GM12878 (cell line): ENCODE measurements at regions of chr1 and their contacts with region 1.

Region 1: GRCh38 chr1:160607011-160607671 is 27.8 kb upstream of the CD84 start:
- DNase-seq: peak; percentile 90
- ATAC-seq: peak; percentile 83
- H3K4me3 ChIP-seq: no peak overlapping the region
- H3K27ac ChIP-seq: peak overlapping the region; percentile 89
- H3K4me1 ChIP-seq: peaks cover 30% of the 10 kb centered on the region
- H3K27me3 ChIP-seq: no peaks in the 10 kb centered on the region
- CTCF ChIP-seq: peak; percentile 68 to 85 (median 84)
- EP300 ChIP-seq: no peak
- POLR2A ChIP-seq: no peak
- RAD21 ChIP-seq: peak; percentile 99

Region 2: GRCh38 chr1:160354388-160354985 is 252.7 kb before region 1 on chr1:
- CTCF ChIA-PET with region 1: interaction called, 8 read pairs
- POLR2A ChIA-PET with region 1: no interaction called
- RAD21 ChIA-PET with region 1: no interaction called
- SMC1A ChIA-PET with region 1: interaction called, 10 read pairs
- in situ Hi-C with region 1: no loop called
- intact Hi-C with region 1: no loop called
- DNase-seq: no peak
- ATAC-seq: peak; percentile 82
- H3K4me3 ChIP-seq: no peak overlapping the region
- H3K27ac ChIP-seq: no peak overlapping the region
- H3K4me1 ChIP-seq: no peaks in the 10 kb centered on the region
- H3K27me3 ChIP-seq: no peaks in the 10 kb centered on the region
- CTCF ChIP-seq: peak; percentile 29 to 55 (median 55)
- EP300 ChIP-seq: no peak
- POLR2A ChIP-seq: no peak
- RAD21 ChIP-seq: peak; percentile 38; the same call in 1 of the 2 replicates

Region 3: DNA sequence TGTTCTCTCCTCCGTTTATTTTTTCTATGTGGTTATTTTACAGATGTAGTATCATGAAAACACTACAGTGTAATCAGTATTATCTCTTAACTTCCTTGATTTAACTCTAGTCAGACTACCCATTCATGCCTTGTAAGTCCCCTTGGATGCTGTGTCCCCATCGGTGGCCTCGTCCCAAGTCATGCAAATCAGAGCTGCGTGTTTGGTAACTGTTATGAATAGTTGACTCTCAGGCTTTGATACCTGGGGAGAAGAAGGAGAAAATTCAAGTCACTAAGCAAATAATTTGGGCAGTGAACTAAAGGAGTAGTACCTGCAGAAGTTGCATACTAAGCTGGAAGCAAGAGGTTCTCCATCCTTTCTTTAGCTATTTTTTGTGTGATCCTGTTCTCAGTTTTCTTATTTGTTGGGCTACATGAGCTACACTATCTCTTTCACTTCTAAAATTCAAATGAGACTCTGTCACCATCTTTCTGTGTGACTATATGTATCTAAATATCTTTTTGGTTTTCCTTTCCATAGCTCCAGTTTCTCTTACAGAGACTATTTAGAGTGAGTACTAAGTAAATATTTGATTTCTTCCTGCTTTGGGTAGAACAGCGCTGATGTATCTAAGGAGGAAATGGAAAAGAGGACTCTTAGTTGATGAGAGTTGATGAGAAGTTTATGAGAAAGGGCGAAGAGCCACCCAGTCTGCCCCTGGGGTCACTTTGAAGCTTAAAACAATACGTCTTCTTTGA is 155.9 kb before region 1 on chr1:
- CTCF ChIA-PET with region 1: interaction called, 7 read pairs
- POLR2A ChIA-PET with region 1: no interaction called
- RAD21 ChIA-PET with region 1: interaction called, 14 read pairs
- SMC1A ChIA-PET with region 1: interaction called, 9 read pairs
- in situ Hi-C with region 1: no loop called
- intact Hi-C with region 1: no loop called
- DNase-seq: peak; percentile 44
- ATAC-seq: peak; percentile 43
- H3K4me3 ChIP-seq: 0 out of 2 replicates have a peak overlapping the region, but pooled peaks have one; percentile 2
- H3K27ac ChIP-seq: peak overlapping the region; percentile 82
- H3K4me1 ChIP-seq: peaks cover 47% of the 10 kb centered on the region
- H3K27me3 ChIP-seq: no peaks in the 10 kb centered on the region
- CTCF ChIP-seq: no peak
- EP300 ChIP-seq: no peak
- POLR2A ChIP-seq: no peak
- RAD21 ChIP-seq: no peak

Region 4: DNA sequence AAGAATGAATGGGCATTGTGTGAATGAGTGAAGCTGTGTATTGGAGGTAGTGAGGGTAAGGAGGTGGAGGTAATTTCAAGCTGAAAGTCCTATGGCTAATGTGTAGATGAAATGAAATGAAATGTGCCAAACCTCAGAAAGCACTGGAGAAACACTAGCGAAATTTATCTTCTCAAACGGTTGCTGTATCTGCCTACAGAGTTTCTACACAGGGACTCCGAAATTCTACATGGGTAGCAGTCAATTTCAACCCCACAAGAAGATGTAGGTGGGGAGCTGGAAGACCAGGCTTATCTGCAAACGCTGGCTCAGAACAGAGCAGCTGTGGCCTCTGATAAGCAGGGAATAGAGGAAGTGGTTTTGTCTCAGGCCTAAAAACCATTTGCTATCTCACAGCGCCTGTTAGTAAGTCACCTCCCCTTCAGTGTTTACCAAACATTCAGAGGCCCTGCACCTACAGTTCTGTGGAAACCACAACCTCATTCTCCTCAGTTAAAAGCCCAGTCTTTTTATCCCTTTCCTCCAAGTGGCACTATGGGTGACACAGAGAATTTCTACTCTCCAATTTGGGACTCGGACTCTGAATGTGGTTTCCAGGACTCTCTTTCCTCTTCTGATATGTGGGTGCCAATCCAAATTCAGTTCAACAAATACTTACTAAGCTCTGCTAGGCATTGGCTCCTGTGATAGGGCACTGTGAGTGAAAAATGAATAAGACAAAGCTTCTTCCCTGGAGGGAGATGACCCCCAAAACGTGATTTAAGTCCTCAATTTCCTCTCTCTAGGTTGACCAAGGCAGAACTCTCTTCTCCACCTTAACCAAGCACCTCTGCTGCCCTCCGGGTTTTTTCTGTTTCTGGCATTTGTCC is 66.9 kb before region 1 on chr1:
- CTCF ChIA-PET with region 1: interaction called, 355 read pairs
- POLR2A ChIA-PET with region 1: interaction called, 12 read pairs
- RAD21 ChIA-PET with region 1: interaction called, 257 read pairs
- SMC1A ChIA-PET with region 1: interaction called, 395 read pairs
- in situ Hi-C with region 1: loop called (anchors 5 kb)
- intact Hi-C with region 1: no loop called
- DNase-seq: peak; percentile 95
- ATAC-seq: peak; percentile 95
- H3K4me3 ChIP-seq: peak overlapping the region; percentile 38; the same call in 1 of the 2 replicates
- H3K27ac ChIP-seq: peak overlapping the region; percentile 92
- H3K4me1 ChIP-seq: peaks cover 23% of the 10 kb centered on the region
- H3K27me3 ChIP-seq: no peaks in the 10 kb centered on the region
- CTCF ChIP-seq: no peak
- EP300 ChIP-seq: peak; percentile 53 to 73; a peak in 3 of 4 replicates
- POLR2A ChIP-seq: peak; percentile 66
- RAD21 ChIP-seq: 0 out of 2 replicates have a peak, but pooled peaks have one; percentile 11

Region 5: GRCh38 chr1:160567858-160568682 is 39.1 kb before region 1 on chr1:
- CTCF ChIA-PET with region 1: interaction called, 6 read pairs
- POLR2A ChIA-PET with region 1: interaction called, 45 read pairs
- RAD21 ChIA-PET with region 1: interaction called, 123 read pairs
- SMC1A ChIA-PET with region 1: interaction called, 117 read pairs
- in situ Hi-C with region 1: no loop called
- intact Hi-C with region 1: no loop called
- DNase-seq: no peak
- ATAC-seq: peak; percentile 86
- H3K4me3 ChIP-seq: peak overlapping the region; percentile 28; the same call in 1 of the 2 replicates
- H3K27ac ChIP-seq: peak overlapping the region; percentile 68
- H3K4me1 ChIP-seq: peaks cover 22% of the 10 kb centered on the region
- H3K27me3 ChIP-seq: no peaks in the 10 kb centered on the region
- CTCF ChIP-seq: no peak
- EP300 ChIP-seq: no peak
- POLR2A ChIP-seq: peak; percentile 38; the same call in 1 of the 2 replicates
- RAD21 ChIP-seq: no peak

Region 6: DNA sequence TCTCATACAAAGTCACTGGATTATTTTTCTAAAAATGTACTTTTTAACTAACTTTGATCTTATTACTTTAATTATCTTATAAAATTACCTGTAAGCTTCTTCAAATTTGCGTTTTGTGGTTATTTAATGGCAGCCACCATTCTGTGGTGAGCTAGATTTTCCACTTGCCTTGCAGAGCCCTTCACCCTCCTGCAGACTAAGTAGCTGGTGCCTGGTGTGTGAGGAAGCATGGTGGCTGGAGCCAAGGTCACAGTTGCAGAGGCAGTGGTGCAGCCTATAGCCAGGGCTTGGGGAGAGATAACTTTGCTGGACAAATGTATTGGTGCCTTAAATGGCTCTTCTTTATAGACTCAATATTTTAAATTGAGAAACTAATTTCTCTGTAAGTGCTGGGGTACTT is 16.7 kb before region 1 on chr1:
- CTCF ChIA-PET with region 1: interaction called, 8 read pairs
- POLR2A ChIA-PET with region 1: interaction called, 3 read pairs
- RAD21 ChIA-PET with region 1: interaction called, 7 read pairs
- SMC1A ChIA-PET with region 1: interaction called, 31 read pairs
- in situ Hi-C with region 1: no loop called
- intact Hi-C with region 1: no loop called
- DNase-seq: no peak
- ATAC-seq: no peak
- H3K4me3 ChIP-seq: no peak overlapping the region
- H3K27ac ChIP-seq: no peak overlapping the region
- H3K4me1 ChIP-seq: no peaks in the 10 kb centered on the region
- H3K27me3 ChIP-seq: no peaks in the 10 kb centered on the region
- CTCF ChIP-seq: no peak
- EP300 ChIP-seq: no peak
- POLR2A ChIP-seq: no peak
- RAD21 ChIP-seq: no peak

Region 7: GRCh38 chr1:160755911-160756848 is 149.0 kb after region 1 on chr1:
- CTCF ChIA-PET with region 1: no interaction called
- POLR2A ChIA-PET with region 1: no interaction called
- RAD21 ChIA-PET with region 1: no interaction called
- SMC1A ChIA-PET with region 1: no interaction called
- in situ Hi-C with region 1: no loop called
- intact Hi-C with region 1: no loop called
- DNase-seq: no peak
- ATAC-seq: peak; percentile 77
- H3K4me3 ChIP-seq: no peak overlapping the region
- H3K27ac ChIP-seq: peak overlapping the region; percentile 49
- H3K4me1 ChIP-seq: peaks cover 20% of the 10 kb centered on the region
- H3K27me3 ChIP-seq: no peaks in the 10 kb centered on the region
- CTCF ChIP-seq: no peak
- EP300 ChIP-seq: peak; percentile 32 to 43; a peak in 1 of 4 replicates
- POLR2A ChIP-seq: peak; percentile 44; the same call in 1 of the 2 replicates
- RAD21 ChIP-seq: no peak

Region 8: GRCh38 chr1:160862203-160863060 is 255.3 kb after region 1 on chr1 and contains the start of gene CD244:
- CTCF ChIA-PET with region 1: no interaction called
- POLR2A ChIA-PET with region 1: no interaction called
- RAD21 ChIA-PET with region 1: no interaction called
- SMC1A ChIA-PET with region 1: no interaction called
- in situ Hi-C with region 1: no loop called
- intact Hi-C with region 1: no loop called
- DNase-seq: peak; percentile 71
- ATAC-seq: peak; percentile 96
- H3K4me3 ChIP-seq: peak within 1 kb of the TSS; percentile 32; the same call in 1 of the 2 replicates
- H3K27ac ChIP-seq: no peak within 1 kb of the TSS
- H3K4me1 ChIP-seq: peaks cover 15% of the 10 kb centered on the region
- H3K27me3 ChIP-seq: no peaks in the 10 kb centered on the region
- CTCF ChIP-seq: no peak
- EP300 ChIP-seq: peak in 1 of 2 experiments; percentile 60; a peak in 1 of 4 replicates
- POLR2A ChIP-seq: peak; percentile 56
- RAD21 ChIP-seq: no peak
- polyA plus RNA-seq, gene CD244: 0.24 to 0.37 TPM